Caco-2 (cell line): ENCODE measurements at regions of chr14 and their contacts with region 1.

Region 1: GRCh38 chr14:90235179-90235976 is 21.0 kb upstream of the PSMC1 start:
- DNase-seq: peak; percentile 43 to 74
- H3K4me3 ChIP-seq: no peak overlapping the region
- H3K4me3 Mint-ChIP-seq: no peak overlapping the region
- H3K27ac Mint-ChIP-seq: no peak overlapping the region
- H3K4me1 ChIP-seq: no peaks in the 10 kb centered on the region
- H3K4me1 Mint-ChIP-seq: no peaks in the 10 kb centered on the region
- H3K27me3 ChIP-seq: no peaks in the 10 kb centered on the region
- H3K27me3 Mint-ChIP-seq: no peaks in the 10 kb centered on the region
- CTCF ChIP-seq: peak; percentile 79 to 95

Region 2: GRCh38 chr14:89936658-89937185 is 298.7 kb before region 1 on chr14:
- CTCF ChIA-PET with region 1: no interaction called
- POLR2A ChIA-PET with region 1: no interaction called
- intact Hi-C with region 1: loop called (anchors 1 kb)
- DNase-seq: no peak
- H3K4me3 ChIP-seq: no peak overlapping the region
- H3K4me3 Mint-ChIP-seq: no peak overlapping the region
- H3K27ac Mint-ChIP-seq: no peak overlapping the region
- H3K4me1 ChIP-seq: no peaks in the 10 kb centered on the region
- H3K4me1 Mint-ChIP-seq: no peaks in the 10 kb centered on the region
- H3K27me3 ChIP-seq: no peaks in the 10 kb centered on the region
- H3K27me3 Mint-ChIP-seq: no peaks in the 10 kb centered on the region
- CTCF ChIP-seq: no peak

Region 3: GRCh38 chr14:90060312-90060964 is 174.9 kb before region 1 on chr14:
- CTCF ChIA-PET with region 1: interaction called, 3 read pairs
- POLR2A ChIA-PET with region 1: no interaction called
- intact Hi-C with region 1: loop called (anchors 5 kb)
- DNase-seq: peak; percentile 52 to 66
- H3K4me3 ChIP-seq: peak overlapping the region; percentile 32
- H3K4me3 Mint-ChIP-seq: peak overlapping the region; percentile 85
- H3K27ac Mint-ChIP-seq: no peak overlapping the region
- H3K4me1 ChIP-seq: peaks cover 8% of the 10 kb centered on the region; the same call in 1 of the 2 replicates
- H3K4me1 Mint-ChIP-seq: peaks cover 10% of the 10 kb centered on the region
- H3K27me3 ChIP-seq: peaks cover 5% of the 10 kb centered on the region
- H3K27me3 Mint-ChIP-seq: peaks cover 32% of the 10 kb centered on the region
- CTCF ChIP-seq: peak; percentile 44 to 46

Region 4: GRCh38 chr14:90114550-90114949 is 120.8 kb before region 1 on chr14:
- CTCF ChIA-PET with region 1: interaction called, 3 read pairs
- POLR2A ChIA-PET with region 1: no interaction called
- intact Hi-C with region 1: loop called (anchors 1 kb)
- DNase-seq: peak; percentile 19 to 42
- H3K4me3 ChIP-seq: no peak overlapping the region
- H3K4me3 Mint-ChIP-seq: no peak overlapping the region
- H3K27ac Mint-ChIP-seq: no peak overlapping the region
- H3K4me1 ChIP-seq: no peaks in the 10 kb centered on the region
- H3K4me1 Mint-ChIP-seq: no peaks in the 10 kb centered on the region
- H3K27me3 ChIP-seq: no peaks in the 10 kb centered on the region; the same call in 1 of the 2 replicates
- H3K27me3 Mint-ChIP-seq: peaks cover 9% of the 10 kb centered on the region
- CTCF ChIP-seq: peak in 1 of 2 experiments; percentile 36

Region 5: GRCh38 chr14:90319173-90319572 is 83.8 kb after region 1 on chr14:
- CTCF ChIA-PET with region 1: no interaction called
- POLR2A ChIA-PET with region 1: no interaction called
- intact Hi-C with region 1: no loop called
- DNase-seq: no peak
- H3K4me3 ChIP-seq: no peak overlapping the region
- H3K4me3 Mint-ChIP-seq: no peak overlapping the region
- H3K27ac Mint-ChIP-seq: no peak overlapping the region
- H3K4me1 ChIP-seq: no peaks in the 10 kb centered on the region
- H3K4me1 Mint-ChIP-seq: no peaks in the 10 kb centered on the region
- H3K27me3 ChIP-seq: no peaks in the 10 kb centered on the region
- H3K27me3 Mint-ChIP-seq: no peaks in the 10 kb centered on the region
- CTCF ChIP-seq: no peak

Region 6: DNA sequence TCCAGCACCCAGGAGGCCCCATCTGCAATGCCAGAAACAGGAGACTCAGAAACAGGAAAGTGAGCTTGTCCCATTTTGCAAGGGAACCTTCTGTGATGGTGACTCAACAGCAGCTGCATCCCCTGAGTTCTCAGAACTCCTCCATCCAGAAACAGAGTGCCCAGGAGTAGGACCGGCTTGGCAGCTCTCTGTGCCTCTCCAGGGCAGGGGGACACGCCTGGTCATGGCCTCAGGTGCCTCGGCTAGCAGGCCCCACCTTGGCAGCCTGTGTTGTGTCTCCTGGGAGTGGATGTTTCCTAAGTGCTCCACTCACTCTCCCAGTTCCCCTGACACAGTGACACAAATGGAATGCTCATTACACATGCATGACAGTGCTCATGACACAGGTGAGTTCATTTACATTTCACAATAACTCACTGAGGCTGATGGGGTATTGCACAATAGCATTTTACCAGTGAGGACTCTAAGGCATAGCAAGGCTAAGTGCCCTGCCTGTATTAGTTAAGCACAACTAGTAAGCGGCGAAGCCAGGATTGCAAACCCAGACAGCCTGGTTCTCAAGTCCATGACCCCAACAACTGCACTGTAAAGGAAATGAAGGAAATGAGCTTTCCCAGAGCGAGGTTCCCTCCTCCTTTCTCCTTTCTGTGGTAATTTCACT is 208.8 kb after region 1 on chr14:
- CTCF ChIA-PET with region 1: no interaction called
- POLR2A ChIA-PET with region 1: no interaction called
- intact Hi-C with region 1: no loop called
- DNase-seq: peak; percentile 65 to 69
- H3K4me3 ChIP-seq: no peak overlapping the region
- H3K4me3 Mint-ChIP-seq: no peak overlapping the region
- H3K27ac Mint-ChIP-seq: peak overlapping the region; percentile 24
- H3K4me1 ChIP-seq: peaks cover 20% of the 10 kb centered on the region
- H3K4me1 Mint-ChIP-seq: peaks cover 19% of the 10 kb centered on the region
- H3K27me3 ChIP-seq: no peaks in the 10 kb centered on the region
- H3K27me3 Mint-ChIP-seq: no peaks in the 10 kb centered on the region
- CTCF ChIP-seq: no peak